ENCODE measurements at regions of chr11 and their contacts with region 1.

Region 1: DNA sequence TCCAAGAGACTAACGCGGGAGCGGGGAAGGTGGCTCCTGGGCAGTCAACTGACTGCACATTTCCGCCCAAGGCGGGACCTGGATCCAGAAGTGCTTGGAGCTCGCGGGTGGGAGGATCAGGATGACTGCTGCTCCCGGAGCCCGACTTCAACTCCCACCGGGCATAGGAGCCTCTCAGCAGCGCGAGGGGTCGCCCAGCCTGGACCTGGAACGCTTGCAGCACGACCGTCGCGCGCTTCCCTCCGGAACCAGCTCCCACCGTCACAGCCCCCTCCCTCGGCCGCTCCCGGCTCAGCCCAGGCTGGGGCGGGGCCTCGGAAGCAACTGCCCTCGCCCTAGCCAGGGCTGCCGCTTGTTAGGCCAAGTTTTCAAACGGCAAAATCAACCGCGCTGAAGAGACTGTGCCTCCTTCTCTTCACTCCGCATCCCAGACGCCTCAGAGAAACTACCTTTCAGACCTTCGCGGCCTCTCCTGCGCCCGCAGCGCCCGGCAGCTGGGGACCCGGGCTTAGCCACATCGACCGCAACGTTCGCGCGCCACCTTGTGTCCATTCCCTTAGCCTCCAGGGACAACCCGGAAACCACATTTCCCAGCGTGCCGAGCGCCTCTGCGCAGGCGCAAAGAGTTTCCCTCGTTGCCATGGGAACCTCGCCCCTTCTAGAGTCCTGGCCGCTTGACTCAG is 14.0 kb downstream of the SSH3 start:
- DNase-seq: peak; percentile 98
- H3K4me3 Mint-ChIP-seq: peak overlapping the region; percentile 94
- H3K27ac Mint-ChIP-seq: peak overlapping the region; percentile 100
- H3K4me1 Mint-ChIP-seq: peaks cover 39% of the 10 kb centered on the region
- H3K27me3 Mint-ChIP-seq: peaks cover 4% of the 10 kb centered on the region

Region 2: DNA sequence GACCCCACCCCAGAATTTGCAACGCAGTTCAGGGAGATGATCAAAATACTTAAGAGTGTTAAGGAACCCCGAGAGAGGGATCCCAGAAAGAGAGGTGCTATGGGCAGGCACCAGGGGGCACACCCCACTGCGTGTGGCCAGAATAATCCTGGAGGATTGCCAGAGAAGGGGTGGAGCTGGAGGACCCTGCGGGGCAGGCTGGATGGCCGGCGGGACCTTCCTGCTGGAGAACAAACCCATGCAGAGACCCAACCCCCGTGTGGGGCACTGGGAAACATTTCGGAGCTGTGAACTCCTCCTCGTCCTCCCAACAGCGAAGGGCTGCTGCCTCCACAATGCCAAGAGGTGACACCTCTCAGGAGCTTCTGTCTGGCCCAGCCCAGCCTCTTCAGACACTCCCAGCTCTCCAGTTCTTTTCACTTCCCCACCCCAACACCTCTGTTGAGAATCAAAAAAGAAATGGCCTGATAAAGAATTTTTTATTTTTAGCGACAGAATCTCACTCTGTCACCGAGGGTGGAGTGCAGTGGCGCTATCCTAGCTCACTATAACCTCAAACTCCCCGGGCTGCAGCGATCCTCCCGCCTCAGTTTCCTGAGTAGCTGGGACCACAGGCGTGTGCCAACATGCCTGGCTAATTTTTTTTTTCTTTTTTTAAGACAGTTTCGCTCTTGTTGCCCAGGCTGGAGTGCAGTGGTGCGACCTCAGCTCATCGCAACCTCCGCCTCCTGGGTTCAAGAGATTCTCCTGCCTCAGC is 235.1 kb before region 1 on chr11:
- intact Hi-C with region 1: loop called (anchors 1 kb)
- DNase-seq: no peak
- H3K4me3 Mint-ChIP-seq: no peak overlapping the region
- H3K27ac Mint-ChIP-seq: no peak overlapping the region
- H3K4me1 Mint-ChIP-seq: peaks cover 13% of the 10 kb centered on the region
- H3K27me3 Mint-ChIP-seq: no peaks in the 10 kb centered on the region

Region 3: GRCh38 chr11:67265633-67266423 is 51.5 kb before region 1 on chr11:
- intact Hi-C with region 1: loop called (anchors 1 kb)
- DNase-seq: peak; percentile 76
- H3K4me3 Mint-ChIP-seq: peak overlapping the region; percentile 83
- H3K27ac Mint-ChIP-seq: peak overlapping the region; percentile 90
- H3K4me1 Mint-ChIP-seq: peaks cover 73% of the 10 kb centered on the region
- H3K27me3 Mint-ChIP-seq: no peaks in the 10 kb centered on the region

Region 4: DNA sequence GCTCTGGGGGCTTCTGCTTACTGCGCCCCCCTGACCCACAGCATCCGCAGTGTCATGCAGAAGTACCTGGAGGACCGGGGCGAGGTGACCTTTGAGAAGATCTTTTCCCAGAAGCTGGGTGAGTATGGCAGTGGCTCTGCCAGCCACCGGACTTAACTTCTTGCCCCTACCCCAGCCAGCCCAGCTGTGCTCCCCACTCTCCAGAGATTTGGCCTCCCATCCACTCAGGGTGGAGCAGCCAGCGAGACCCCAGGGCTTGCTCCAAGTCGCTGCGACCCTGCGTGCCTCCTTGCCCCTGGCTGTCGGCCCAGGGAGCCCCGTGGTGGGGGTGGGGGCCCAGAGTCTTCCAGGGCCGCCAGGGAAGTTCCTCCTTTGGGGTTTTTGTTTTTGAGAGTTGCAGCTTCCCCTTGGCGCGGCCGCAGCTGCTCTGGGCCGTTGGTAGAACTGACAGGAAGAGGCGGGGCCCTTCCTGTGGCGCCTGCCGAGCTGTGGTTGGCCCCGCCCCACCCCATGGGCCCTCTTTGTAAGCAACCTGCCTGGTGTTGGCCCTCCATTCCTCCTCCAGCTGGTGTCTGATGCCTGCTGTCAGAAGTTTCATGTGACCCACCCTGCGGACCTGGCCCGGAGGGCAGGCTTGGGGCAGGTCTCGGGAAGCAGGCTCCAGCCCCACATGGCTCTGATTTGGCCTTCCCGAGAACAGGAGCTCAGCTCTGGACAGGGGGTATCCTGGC is 40.0 kb before region 1 on chr11:
- intact Hi-C with region 1: loop called (anchors 1 kb)
- DNase-seq: peak; percentile 87
- H3K4me3 Mint-ChIP-seq: peak overlapping the region; percentile 77
- H3K27ac Mint-ChIP-seq: peak overlapping the region; percentile 96
- H3K4me1 Mint-ChIP-seq: peaks cover 50% of the 10 kb centered on the region
- H3K27me3 Mint-ChIP-seq: no peaks in the 10 kb centered on the region

Region 5: DNA sequence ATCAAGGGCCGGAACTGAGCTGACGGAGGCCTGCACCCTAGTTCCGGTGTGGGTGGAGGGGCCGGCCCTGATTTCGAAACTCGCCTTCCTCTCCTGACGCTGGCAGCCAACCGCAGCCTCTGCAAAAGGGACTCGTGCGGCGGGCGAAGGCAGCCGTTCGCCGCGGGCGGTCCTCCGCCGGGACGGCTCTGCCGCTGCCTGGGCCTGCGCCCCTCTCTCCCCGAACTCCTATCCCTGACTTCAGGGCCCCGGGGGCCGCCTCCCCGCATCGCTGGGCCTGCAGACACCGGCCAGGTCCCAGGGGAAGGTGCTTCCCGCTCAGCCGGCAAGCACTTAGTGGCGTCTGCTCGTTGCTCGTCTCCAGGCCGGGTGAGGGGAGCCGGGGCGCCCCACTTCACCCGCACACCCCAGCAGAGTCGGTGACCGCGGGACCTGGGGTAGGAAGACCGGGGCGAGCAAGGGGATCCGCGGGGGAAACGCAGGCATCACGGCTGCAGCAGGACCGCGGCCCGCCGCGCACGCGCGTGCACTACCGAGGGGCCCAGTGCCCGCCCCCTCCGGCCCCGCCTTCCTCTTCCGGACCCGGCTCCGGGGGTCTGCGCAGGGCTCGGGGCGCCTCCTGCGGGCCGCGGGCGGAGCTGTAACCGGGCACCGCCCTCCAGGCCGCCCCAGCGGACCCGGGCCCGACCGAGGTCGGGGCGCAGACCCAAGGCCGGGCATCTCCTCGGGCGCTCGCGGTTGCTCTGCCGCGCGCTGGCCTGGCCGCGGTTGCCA is 28.7 kb before region 1 on chr11:
- intact Hi-C with region 1: loop called (anchors 1 kb)
- DNase-seq: peak; percentile 88
- H3K4me3 Mint-ChIP-seq: peak overlapping the region; percentile 77
- H3K27ac Mint-ChIP-seq: peak overlapping the region; percentile 97
- H3K4me1 Mint-ChIP-seq: peaks cover 36% of the 10 kb centered on the region
- H3K27me3 Mint-ChIP-seq: peaks cover 2% of the 10 kb centered on the region

Region 6: DNA sequence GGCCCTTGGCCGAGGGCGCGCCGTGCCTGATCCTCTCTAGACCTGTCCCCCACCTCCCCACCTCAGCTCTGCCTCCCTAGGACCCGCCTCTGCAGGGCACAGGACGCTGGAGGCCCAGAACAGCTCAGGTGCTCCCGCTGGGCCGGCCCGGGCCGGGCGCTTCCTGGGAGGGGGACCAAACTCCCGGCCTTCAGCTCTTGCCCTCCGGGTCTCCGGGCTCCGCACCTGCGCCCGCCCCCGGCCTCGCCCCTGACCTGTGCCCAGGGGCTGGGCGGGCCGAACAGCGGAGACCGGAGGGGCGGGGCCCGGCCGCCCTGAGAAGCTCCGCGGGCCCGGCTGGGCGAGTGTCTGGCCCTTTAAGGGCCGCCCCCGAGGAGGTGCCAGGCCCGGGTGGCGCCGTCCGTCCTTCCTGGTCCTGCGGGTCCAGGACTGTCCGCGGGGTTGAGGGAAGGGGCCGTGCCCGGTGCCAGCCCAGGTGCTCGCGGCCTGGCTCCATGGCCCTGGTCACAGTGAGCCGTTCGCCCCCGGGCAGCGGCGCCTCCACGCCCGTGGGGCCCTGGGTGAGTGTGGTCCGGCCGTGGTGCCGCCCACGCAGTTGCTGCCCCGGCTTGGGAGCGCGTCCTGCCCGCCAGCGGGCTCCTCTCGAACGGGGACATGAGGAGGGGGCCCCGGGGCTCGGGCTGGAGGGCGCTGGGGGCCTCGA is 14.1 kb before region 1 on chr11 and contains the start of gene SSH3:
- intact Hi-C with region 1: loop called (anchors 2 kb)
- DNase-seq: no peak
- H3K4me3 Mint-ChIP-seq: peak within 1 kb of the TSS; percentile 15
- H3K27ac Mint-ChIP-seq: no peak within 1 kb of the TSS
- H3K4me1 Mint-ChIP-seq: peaks cover 11% of the 10 kb centered on the region
- H3K27me3 Mint-ChIP-seq: no peaks in the 10 kb centered on the region
- total RNA-seq, gene SSH3: 9.2 and 9.4 TPM in 2 replicates

Region 7: DNA sequence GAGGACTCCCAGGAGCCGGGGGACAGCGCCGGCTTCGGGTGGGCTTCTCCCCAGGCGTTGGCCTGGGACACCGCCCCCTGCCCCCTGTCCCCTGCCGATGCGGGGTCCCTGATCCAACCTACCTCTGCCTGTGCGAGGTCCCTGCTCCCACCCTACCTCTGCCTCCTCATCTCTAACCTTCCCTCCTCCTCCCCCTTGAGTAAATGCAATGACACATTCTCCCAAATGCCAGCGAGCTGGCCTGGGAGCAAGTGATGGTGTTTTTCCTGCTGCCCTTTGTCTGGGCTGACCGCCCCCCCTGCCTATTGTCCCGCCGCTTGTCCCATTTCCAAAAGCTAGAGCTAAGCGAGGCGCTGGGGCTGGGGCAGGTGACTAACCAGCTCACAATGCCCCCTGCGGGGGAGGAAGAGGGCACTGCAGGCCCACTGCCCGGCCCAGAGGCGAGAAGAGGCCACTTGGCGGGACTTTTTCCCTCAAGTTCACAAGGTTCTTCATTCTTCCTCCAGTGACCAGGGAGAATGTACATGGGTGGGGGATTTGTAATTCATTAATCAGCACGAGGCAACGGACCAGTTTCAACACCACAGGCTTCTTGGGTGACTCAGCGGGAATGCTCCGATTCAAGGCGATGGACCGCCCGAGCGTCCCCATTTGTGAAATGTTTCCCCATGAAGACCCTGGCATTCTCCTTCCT is 56.7 kb after region 1 on chr11:
- intact Hi-C with region 1: no loop called
- DNase-seq: peak; percentile 31
- H3K4me3 Mint-ChIP-seq: peak overlapping the region; percentile 87
- H3K27ac Mint-ChIP-seq: no peak overlapping the region
- H3K4me1 Mint-ChIP-seq: peaks cover 20% of the 10 kb centered on the region
- H3K27me3 Mint-ChIP-seq: peaks cover 58% of the 10 kb centered on the region